Activated B cell treated with CpG ODN at 0.5 μM for 24 hours (primary cell): ENCODE measurements at regions of chr4 and their contacts with region 1.

Region 1: GRCh38 chr4:184408021-184408710 is 66.2 kb downstream of the IRF2 start:
- DNase-seq: no peak
- ATAC-seq: no peak
- H3K4me3 Mint-ChIP-seq: no peak overlapping the region
- H3K27ac Mint-ChIP-seq: peak overlapping the region; percentile 41
- H3K4me1 Mint-ChIP-seq: peaks cover 65% of the 10 kb centered on the region
- H3K27me3 Mint-ChIP-seq: no peaks in the 10 kb centered on the region
- CTCF ChIP-seq: no peak

Region 2: DNA sequence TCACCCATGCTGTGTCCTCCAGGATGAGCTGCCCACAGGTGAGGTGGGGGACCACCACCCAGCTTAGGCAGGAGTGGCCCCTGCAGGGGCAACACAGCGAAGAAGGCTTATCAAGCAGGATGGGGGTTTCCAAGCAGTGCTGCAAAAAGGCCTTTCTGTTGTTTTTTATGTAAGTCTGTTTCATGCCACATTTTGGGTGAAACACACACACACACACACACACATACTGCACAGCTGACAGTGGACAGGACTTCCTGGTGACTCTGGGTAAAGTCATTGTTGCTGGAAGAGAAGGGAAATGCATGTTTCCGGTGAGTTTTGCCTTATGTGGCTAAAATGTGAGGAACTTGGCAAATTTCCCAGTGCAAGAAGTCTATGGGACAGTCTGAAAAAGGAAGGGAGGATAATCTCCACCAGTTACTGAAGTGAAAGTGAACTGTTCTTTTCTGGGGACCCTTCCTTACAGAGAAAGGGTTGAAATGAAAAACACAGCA is 53.0 kb before region 1 on chr4:
- CTCF ChIA-PET with region 1: no interaction called
- POLR2A ChIA-PET with region 1: interaction called, 10 read pairs
- intact Hi-C with region 1: no loop called
- DNase-seq: no peak
- ATAC-seq: peak; percentile 58
- H3K4me3 Mint-ChIP-seq: no peak overlapping the region
- H3K27ac Mint-ChIP-seq: peak overlapping the region; percentile 27
- H3K4me1 Mint-ChIP-seq: peaks cover 33% of the 10 kb centered on the region
- H3K27me3 Mint-ChIP-seq: no peaks in the 10 kb centered on the region
- CTCF ChIP-seq: no peak

Region 3: GRCh38 chr4:184514121-184514988 is 106.2 kb after region 1 on chr4:
- CTCF ChIA-PET with region 1: no interaction called
- POLR2A ChIA-PET with region 1: interaction called, 10 read pairs
- intact Hi-C with region 1: no loop called
- DNase-seq: no peak
- ATAC-seq: peak; percentile 90
- H3K4me3 Mint-ChIP-seq: peak overlapping the region; percentile 32
- H3K27ac Mint-ChIP-seq: peak overlapping the region; percentile 54
- H3K4me1 Mint-ChIP-seq: peaks cover 31% of the 10 kb centered on the region
- H3K27me3 Mint-ChIP-seq: no peaks in the 10 kb centered on the region
- CTCF ChIP-seq: no peak